GM13976 (cell line): ENCODE measurements at regions of chr2 and their contacts with region 1.

Region 1: DNA sequence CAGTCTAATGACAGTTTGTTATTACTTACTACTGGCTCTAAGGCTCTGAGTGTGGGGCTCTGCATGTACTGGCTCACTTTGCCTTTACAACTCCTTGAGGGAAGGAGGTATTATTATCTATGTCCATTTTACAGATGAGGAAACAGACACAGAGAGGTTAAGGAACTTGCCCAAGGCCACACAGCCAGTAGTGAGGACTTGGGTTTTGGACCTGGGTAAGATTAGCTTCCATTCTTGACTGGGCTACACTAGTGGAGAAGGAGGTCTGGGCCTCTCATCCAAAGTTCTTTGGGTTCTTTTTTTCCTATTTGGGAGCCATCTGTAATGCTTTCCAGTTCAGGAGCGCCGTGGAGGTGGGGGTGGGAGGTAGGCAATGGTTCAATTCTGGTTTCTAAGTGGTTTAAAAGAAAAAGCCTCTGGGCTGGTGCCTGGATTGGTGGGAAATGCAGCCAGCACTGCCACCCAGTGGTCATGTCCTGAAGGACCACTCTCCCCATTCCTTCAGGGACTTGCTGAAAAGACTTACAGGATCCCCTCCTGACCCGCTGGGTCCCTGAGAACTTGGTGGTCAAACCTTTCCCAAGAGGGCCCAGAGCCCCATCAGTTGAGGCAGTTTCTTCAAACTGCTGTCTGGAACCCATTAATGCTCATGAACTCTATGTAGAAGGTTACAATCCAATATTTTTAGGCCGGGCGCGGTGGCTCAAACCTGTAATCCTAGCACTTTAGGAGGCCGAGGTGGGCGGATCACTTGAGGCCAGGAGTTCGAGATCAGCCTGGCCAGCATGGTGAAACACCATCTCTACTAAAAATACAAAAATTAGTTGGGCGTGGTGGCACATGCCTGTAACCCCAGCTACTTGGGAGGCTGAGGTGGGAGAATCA is 38.6 kb upstream of the NOTO start:
- DNase-seq: peak; percentile 83
- CTCF ChIP-seq: peak; percentile 71

Region 2: DNA sequence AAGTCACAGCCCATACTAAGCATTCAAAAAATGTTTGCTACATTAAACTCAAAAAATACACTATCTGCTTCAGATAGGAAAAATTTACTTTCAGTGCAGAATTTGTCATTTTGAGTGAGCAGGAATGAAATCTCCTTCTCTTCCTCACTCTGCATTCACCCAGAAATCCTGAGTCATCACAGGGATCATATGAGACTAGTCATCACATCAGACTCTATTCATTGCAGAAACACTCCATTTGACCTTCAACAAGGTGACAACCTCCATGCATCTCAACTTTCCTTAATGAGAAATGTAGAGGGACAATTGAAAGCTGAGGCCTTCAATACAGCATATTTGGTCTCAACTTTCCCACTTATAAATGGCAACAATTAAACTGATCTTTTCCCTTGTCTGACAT is 885.7 kb before region 1 on chr2:
- in situ Hi-C with region 1: no loop called
- DNase-seq: no peak
- CTCF ChIP-seq: no peak

Region 3: DNA sequence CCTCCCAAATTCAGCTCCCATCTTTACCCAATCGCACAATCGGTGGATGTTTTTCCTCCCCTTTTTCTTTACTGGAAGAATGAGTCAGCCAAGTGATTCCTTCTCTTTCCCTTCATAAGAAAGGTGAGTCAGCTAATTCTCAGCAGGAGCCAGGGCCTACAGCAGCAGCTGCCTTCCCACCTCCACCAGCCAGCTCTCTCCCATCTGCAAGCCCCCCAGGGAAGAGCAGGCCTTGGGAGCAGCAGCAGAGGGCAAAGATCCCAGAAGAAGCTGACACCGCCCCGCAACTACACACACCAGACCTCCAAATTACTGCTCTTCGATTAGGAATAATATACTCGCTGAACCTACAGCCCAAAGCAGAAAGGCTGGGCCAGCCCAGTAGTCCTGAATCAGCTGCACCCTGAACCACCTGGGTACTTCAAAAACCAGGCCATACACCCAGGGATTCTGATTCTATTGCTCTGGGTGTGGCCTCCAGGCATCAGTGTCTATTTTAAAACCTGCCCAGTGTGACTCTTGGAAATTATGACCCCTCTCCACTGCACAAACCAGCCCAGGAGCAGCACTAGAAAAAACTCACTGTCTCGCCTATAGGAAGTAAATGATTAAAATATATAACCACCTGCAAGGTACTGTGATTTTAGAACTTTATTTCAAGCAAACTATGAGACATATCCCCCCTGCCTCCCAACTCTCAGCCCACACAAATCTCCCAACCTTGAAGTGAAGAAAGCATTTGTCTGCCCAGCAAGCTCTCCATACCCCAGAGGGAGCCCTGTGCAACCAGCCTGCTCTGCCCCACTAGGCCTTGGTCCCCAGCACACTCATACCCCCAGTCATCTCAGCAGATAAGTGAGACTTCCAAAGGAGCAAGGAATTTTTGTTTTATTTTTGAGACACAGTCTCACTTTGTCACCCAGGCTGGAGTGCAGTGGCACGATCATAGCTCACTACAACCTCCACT is 99.5 kb before region 1 on chr2:
- in situ Hi-C with region 1: no loop called
- DNase-seq: no peak
- CTCF ChIP-seq: no peak

Region 4: GRCh38 chr2:73085691-73086360 is 77.9 kb before region 1 on chr2:
- in situ Hi-C with region 1: loop called (anchors 10 kb)
- DNase-seq: peak; percentile 88
- CTCF ChIP-seq: peak; percentile 82

Region 5: GRCh38 chr2:73293534-73294171 is 129.9 kb after region 1 on chr2 and contains the start of gene EGR4:
- in situ Hi-C with region 1: no loop called
- DNase-seq: peak; percentile 97
- CTCF ChIP-seq: no peak

Region 6: GRCh38 chr2:73716543-73717250 is 553.0 kb after region 1 on chr2:
- in situ Hi-C with region 1: no loop called
- DNase-seq: no peak
- CTCF ChIP-seq: no peak